Activated CD4-positive, alpha-beta memory T cell treated with anti-CD3 and anti-CD28 coated beads for 36 hours (primary cell): ENCODE measurements at regions of chr13 and their contacts with region 1.

Region 1: DNA sequence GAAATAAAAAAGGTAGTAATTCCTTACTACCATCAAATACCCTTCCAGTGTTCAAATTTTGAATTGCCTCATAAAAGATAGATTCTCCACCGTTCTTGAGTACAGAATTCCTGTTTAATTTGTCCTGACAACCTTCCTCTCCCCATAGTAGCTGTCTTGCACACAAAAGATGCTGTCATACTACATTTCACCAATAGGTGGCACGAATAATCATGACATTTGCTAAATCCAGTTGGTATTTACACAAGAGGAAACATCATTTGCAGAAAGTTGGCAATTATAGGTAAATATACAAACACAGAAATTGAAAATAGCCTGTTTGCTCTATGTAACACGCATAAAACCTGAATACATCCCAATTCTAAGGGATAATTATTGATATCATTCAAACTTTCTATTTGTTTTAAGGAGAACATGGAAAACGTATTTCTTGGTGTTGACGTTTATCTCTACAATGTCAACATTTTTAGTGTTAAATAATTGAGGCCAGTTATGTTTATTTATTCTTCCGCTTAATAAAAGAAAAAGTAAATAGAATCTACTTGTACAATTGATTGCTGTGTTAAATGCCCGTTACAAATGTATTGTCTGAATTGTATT is 58.3 kb upstream of the CLDN10 start:
- DNase-seq: no peak
- H3K4me3 Mint-ChIP-seq: no peak overlapping the region
- H3K27ac Mint-ChIP-seq: no peak overlapping the region
- H3K4me1 Mint-ChIP-seq: no peaks in the 10 kb centered on the region
- H3K27me3 Mint-ChIP-seq: peaks cover 18% of the 10 kb centered on the region

Region 2: GRCh38 chr13:95660981-95661581 is 166.9 kb after region 1 on chr13:
- CTCF ChIA-PET with region 1: no interaction called
- POLR2A ChIA-PET with region 1: no interaction called
- intact Hi-C with region 1: loop called (anchors 5 kb)
- DNase-seq: no peak
- H3K4me3 Mint-ChIP-seq: no peak overlapping the region
- H3K27ac Mint-ChIP-seq: no peak overlapping the region
- H3K4me1 Mint-ChIP-seq: no peaks in the 10 kb centered on the region
- H3K27me3 Mint-ChIP-seq: peaks cover 16% of the 10 kb centered on the region